ENCODE measurements at regions of chr3 and their contacts with region 1.

Region 1: DNA sequence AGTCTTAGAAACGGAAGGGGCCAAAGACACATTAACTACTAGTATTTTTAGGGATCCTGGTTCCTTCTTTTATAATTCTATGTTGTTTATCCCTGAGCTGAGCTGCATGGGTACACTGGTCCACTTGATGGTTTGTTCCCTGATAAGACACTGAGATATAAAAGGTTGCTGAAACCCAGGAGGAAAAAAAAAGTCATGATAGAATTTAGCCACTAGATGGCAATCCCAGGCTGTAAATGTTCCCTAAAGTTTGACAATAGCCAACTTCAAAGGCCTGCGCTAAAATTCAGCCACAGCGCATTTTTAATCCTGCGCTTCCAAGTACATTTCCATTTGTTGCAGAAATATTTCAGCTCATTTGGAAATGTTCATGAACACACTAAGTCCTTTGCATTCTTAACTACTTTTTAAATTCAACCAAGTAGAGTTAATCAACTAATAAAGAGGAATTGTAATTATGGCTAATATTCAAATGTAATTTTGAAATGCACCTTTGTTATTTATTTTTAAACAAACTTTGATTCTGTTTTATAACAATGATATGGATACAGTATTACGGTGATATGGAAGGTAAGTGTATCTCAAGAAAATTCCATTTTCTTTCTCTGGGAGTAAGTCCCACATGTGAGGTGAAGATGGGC is 249.3 kb upstream of the FEZF2 start:
- DNase-seq: peak; percentile 76
- H3K4me3 ChIP-seq: no peak overlapping the region
- H3K27ac ChIP-seq: no peak overlapping the region
- H3K4me1 ChIP-seq: no peaks in the 10 kb centered on the region
- H3K27me3 ChIP-seq: peaks cover 0 to 5% of the 10 kb centered on the region in 2 experiments
- CTCF ChIP-seq: peak; percentile 56 to 58
- POLR2A ChIP-seq: no peak

Region 2: DNA sequence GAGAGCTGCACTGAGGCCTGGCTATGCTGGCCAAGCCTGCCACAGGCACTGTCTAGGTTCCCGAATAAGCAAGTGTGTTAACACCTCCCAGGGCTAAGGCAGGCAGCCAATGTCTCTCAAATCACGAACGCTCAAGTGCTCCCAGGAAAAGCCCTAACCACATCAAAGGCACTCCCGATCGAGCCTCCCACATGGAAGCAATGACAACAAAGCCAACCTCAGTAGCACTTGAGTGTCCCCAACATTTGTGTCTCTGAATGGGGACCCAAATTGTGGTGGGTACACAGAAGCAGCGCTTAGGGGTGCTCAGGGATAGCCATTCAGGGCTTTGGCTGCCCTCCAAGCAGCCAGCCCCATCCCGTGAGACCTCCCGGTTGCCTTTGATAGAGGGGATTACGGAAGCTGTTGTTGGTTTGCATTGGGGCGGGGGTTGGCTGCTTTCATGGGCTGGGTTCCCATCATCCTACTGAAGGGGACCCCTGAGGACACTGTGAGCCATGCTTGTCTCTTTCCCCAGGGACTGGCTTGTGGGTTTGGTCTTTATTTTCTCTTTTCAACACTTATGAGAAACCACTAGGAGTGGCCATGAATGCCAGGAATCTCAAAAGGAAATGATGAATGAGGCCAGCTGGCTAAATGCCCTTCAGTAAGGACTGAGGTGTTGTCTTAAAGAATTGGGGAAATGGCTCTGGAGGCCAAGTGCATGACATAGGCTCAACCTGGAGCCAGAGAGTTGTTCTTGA is 15.2 kb before region 1 on chr3:
- CTCF ChIA-PET with region 1: interaction called, 16 read pairs
- POLR2A ChIA-PET with region 1: no interaction called
- dilution Hi-C with region 1: no loop called
- intact Hi-C with region 1: loop called (anchors 1 kb)
- DNase-seq: peak; percentile 85
- H3K4me3 ChIP-seq: no peak overlapping the region
- H3K27ac ChIP-seq: peak overlapping the region; percentile 77
- H3K4me1 ChIP-seq: peaks cover 52% of the 10 kb centered on the region
- H3K27me3 ChIP-seq: no peaks in the 10 kb centered on the region
- CTCF ChIP-seq: no peak
- POLR2A ChIP-seq: no peak

Region 3: DNA sequence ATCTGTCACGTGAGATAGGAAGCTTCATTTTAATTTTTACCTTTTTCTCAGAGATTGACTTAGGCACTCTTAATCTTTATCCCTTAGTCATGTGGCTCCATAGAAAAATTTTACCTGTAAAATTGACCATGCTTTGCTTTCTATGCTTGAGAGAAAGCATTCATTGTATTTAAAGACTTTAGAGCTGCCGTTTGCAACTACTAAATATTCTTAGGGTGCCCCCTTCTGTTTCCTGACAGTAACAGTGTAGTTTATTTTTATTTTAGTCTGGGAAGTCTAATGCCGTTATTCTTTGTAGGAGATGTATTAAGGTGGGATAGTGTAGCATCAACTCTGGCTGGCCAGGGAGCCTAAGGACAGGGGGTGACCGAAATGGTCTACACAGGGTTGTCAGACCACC is 571.0 kb after region 1 on chr3:
- CTCF ChIA-PET with region 1: interaction called, 8 read pairs
- POLR2A ChIA-PET with region 1: no interaction called
- dilution Hi-C with region 1: no loop called
- intact Hi-C with region 1: loop called (anchors 5 kb)
- DNase-seq: peak; percentile 3
- H3K4me3 ChIP-seq: no peak overlapping the region
- H3K27ac ChIP-seq: no peak overlapping the region
- H3K4me1 ChIP-seq: no peaks in the 10 kb centered on the region
- H3K27me3 ChIP-seq: no peaks in the 10 kb centered on the region
- CTCF ChIP-seq: no peak
- POLR2A ChIP-seq: no peak

Region 4: GRCh38 chr3:63228087-63229023 is 605.7 kb after region 1 on chr3:
- CTCF ChIA-PET with region 1: interaction called, 15 read pairs
- POLR2A ChIA-PET with region 1: no interaction called
- dilution Hi-C with region 1: no loop called
- intact Hi-C with region 1: loop called (anchors 1 kb)
- DNase-seq: peak; percentile 13
- H3K4me3 ChIP-seq: no peak overlapping the region
- H3K27ac ChIP-seq: no peak overlapping the region
- H3K4me1 ChIP-seq: no peaks in the 10 kb centered on the region
- H3K27me3 ChIP-seq: no peaks in the 10 kb centered on the region
- CTCF ChIP-seq: peak; percentile 16 to 21
- POLR2A ChIP-seq: no peak

Region 5: DNA sequence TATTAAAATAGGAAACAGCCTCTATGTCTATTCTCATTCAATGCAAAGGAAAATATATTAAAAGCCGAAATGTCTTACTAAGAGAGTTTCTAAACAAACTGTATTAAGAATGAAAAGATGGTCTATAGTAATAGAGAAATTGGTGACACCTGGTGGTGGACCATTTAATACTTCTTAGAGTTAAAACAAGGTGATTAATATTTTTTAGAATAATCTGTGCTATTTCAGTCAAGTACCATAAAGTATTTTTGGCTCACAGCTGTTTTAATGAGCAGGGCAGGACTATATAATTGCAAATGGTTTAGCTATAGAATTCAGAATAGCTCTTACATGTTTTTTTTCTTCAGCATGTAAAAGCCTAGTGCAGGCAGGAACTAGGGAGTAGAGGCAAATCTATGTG is 711.2 kb after region 1 on chr3:
- CTCF ChIA-PET with region 1: interaction called, 11 read pairs
- POLR2A ChIA-PET with region 1: no interaction called
- dilution Hi-C with region 1: no loop called
- intact Hi-C with region 1: loop called (anchors 1 kb)
- DNase-seq: no peak
- H3K4me3 ChIP-seq: no peak overlapping the region
- H3K27ac ChIP-seq: no peak overlapping the region
- H3K4me1 ChIP-seq: no peaks in the 10 kb centered on the region
- H3K27me3 ChIP-seq: no peaks in the 10 kb centered on the region
- CTCF ChIP-seq: no peak
- POLR2A ChIP-seq: no peak

Region 6: DNA sequence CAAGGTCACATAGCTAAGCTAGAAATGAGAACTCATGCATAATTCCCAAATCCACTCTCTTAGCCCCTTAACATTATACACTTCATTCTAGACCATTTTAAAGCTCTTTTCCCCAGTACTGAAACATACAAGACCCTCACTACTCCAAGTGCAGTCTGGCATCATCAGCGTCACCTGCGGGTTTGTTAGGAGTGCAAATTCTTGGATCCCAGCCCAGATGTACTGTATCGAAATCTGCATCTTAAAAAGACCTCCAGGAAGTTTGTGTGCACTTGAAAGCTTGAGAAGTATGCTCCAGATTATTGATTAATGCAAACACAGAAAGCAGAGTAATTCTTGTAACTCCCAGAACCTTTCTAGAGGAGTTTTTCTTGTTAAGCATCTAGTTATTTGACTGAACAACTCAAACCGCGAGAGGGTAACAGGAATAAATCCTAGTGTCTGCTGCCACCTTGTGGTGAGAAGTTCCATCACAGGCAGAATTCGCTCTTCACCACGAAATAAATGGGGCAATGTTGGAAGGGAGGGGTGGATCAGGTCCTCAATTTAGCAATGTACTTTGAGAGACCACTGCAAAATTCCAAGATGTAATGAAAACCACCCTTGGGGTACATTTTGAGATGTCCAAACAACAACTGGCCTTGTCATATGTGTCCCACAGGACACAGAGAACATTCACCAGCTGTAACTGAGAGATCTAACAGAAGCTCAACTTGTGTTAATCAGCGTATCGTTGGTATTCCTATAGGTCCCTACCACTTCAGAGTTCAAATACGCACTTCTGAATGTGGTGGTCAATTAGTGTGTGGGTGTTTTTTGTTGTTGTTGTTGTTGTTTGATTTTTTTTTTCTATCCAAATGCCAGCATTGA is 1195.8 kb after region 1 on chr3:
- CTCF ChIA-PET with region 1: interaction called, 15 read pairs
- POLR2A ChIA-PET with region 1: no interaction called
- dilution Hi-C with region 1: no loop called
- intact Hi-C with region 1: loop called (anchors 1 kb)
- DNase-seq: peak; percentile 61
- H3K4me3 ChIP-seq: no peak overlapping the region
- H3K27ac ChIP-seq: no peak overlapping the region
- H3K4me1 ChIP-seq: no peaks in the 10 kb centered on the region
- H3K27me3 ChIP-seq: no peaks in the 10 kb centered on the region
- CTCF ChIP-seq: peak; percentile 63 to 75
- POLR2A ChIP-seq: no peak

Measured in endothelial cell of umbilical vein (primary cell).